CD4-positive, alpha-beta memory T cell (primary cell): ENCODE measurements at regions of chr11 and their contacts with region 1.

Region 1: GRCh38 chr11:13462901-13463778 is at the start of gene BTBD10:
- DNase-seq: peak; percentile 91 to 95 (median 92)
- H3K4me3 ChIP-seq: peak within 1 kb of the TSS; percentile 90 to 95
- H3K4me3 Mint-ChIP-seq: peak within 1 kb of the TSS; percentile 97 to 99 (median 98)
- H3K27ac ChIP-seq: peak within 1 kb of the TSS; percentile 92
- H3K27ac Mint-ChIP-seq: peak within 1 kb of the TSS; percentile 96 to 99 (median 97)
- H3K4me1 ChIP-seq: peaks cover 34% of the 10 kb centered on the region
- H3K4me1 Mint-ChIP-seq: peaks cover 30 to 56% (median 44%) of the 10 kb centered on the region in 4 donors
- H3K27me3 ChIP-seq: no peaks in the 10 kb centered on the region
- H3K27me3 Mint-ChIP-seq: no peaks in the 10 kb centered on the region
- total RNA-seq, gene BTBD10: 22.4 to 22.6 TPM

Region 2: GRCh38 chr11:12963792-12964536 is 499.2 kb before region 1 on chr11:
- CTCF ChIA-PET with region 1: interaction called, 4 read pairs
- POLR2A ChIA-PET with region 1: no interaction called
- intact Hi-C with region 1: loop called (anchors 2 kb)
- DNase-seq: peak; percentile 41 to 60 (median 52)
- H3K4me3 ChIP-seq: no peak overlapping the region
- H3K4me3 Mint-ChIP-seq: no peak overlapping the region
- H3K27ac ChIP-seq: no peak overlapping the region
- H3K27ac Mint-ChIP-seq: peak overlapping the region in 1 of 7 donors; percentile 31
- H3K4me1 ChIP-seq: no peaks in the 10 kb centered on the region
- H3K4me1 Mint-ChIP-seq: no peaks in the 10 kb centered on the region
- H3K27me3 ChIP-seq: no peaks in the 10 kb centered on the region
- H3K27me3 Mint-ChIP-seq: peaks cover 18 to 21% of the 10 kb centered on the region in 2 donors

Region 3: DNA sequence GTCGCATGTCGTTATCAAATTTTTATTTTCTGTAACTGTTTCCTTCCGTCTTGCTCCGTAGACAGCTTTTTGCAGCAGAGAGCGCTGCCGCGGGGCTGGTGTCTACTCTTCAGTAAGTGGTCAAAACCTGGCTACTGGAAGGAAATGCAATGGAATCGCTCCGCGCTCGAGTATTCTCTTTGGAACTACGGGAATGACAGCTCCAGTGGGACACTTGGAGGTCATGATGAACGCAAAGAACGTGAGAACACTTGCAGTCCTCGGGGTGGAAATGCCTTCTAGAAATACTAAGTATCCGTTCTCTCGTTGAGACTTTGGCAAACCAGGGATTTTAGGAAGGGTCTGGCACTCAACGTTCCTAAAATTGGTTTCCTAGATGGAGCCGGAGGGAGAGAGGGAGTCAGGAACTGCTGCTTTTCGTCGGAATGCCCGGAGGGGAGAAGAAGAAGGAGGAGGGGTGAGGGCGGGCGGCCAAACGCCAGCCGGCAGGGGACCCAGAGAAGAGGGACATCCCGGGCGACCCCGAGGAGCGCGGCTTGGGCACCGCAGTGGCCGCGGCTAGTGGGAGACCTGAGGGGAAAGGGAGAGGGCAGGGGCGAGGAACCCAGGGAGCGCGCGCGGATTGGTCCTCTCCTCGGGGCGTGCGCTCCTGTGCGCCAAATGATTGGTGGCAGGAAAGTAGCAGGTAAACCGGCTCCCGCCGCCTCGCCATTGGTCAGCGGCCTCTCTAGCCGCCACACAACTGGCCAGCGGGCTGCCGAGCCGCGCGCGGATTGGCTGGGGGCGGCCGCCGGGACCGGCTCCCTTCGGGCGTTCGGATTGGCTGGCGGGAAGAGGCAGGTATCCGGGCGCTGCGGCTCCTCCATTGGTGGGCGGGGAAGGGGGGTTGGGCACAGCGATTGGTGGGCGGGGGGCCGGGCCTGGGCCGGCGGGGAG is 186.0 kb before region 1 on chr11:
- CTCF ChIA-PET with region 1: interaction called, 4 read pairs
- POLR2A ChIA-PET with region 1: interaction called, 11 read pairs
- intact Hi-C with region 1: loop called (anchors 1 kb)
- DNase-seq: peak; percentile 97 to 98 (median 98)
- H3K4me3 ChIP-seq: peak overlapping the region; percentile 83 to 95
- H3K4me3 Mint-ChIP-seq: peak overlapping the region; percentile 93 to 100 (median 98)
- H3K27ac ChIP-seq: peak overlapping the region; percentile 80
- H3K27ac Mint-ChIP-seq: peak overlapping the region; percentile 94 to 99 (median 96)
- H3K4me1 ChIP-seq: peaks cover 42% of the 10 kb centered on the region
- H3K4me1 Mint-ChIP-seq: peaks cover 33 to 52% (median 42%) of the 10 kb centered on the region in 4 donors
- H3K27me3 ChIP-seq: peaks cover 5% of the 10 kb centered on the region
- H3K27me3 Mint-ChIP-seq: peaks cover 0 to 2% of the 10 kb centered on the region in 2 donors

Region 4: DNA sequence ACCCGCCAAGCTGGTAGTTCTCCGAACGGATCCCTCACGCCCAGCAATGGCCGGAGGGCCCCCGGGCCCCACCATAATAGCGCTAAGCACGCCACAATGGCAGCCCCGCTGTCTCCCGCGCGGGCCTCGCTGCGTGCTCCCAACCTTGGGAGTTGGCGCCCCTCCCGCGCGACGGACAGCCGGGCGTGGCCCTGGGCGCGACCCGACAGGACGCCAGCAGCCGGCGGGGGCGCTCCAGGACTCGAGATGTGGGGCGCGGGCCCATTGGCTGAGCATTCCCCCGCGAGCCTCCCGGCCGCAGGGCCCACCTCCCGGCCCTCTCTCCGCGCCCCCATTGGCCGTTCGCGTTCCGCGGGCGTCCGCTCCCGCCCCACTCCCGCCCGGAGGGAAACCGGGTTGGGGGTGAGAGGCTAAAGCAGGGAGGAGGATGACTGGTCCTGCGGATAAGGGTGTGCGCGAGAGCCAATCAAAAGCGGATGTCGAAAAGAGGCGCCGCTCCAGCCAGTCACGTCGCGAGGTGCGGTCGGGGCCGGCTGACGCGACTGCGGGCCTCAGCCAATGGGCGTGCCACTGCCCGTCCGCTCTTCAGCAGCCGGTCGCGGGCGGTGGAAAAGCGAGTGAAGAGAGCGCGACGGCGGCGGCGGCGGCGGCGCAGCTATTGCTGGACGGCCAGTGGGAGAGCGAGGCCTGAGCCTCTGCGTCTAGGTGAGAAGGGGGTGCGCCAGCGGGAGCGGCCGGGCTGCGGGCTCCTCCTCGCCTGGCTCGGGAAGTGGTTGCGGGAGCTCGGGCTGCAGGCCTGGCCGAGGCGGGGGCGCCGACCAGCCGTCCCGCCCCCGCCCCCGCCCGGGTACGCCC is 205.2 kb after region 1 on chr11 and contains the start of gene FAR1:
- CTCF ChIA-PET with region 1: interaction called, 4 read pairs
- POLR2A ChIA-PET with region 1: interaction called, 7 read pairs
- intact Hi-C with region 1: loop called (anchors 1 kb)
- DNase-seq: peak; percentile 96 to 98 (median 97)
- H3K4me3 ChIP-seq: peak within 1 kb of the TSS; percentile 73 to 84
- H3K4me3 Mint-ChIP-seq: peak within 1 kb of the TSS; percentile 93 to 99 (median 96)
- H3K27ac ChIP-seq: peak within 1 kb of the TSS; percentile 65
- H3K27ac Mint-ChIP-seq: peak within 1 kb of the TSS; percentile 95 to 97 (median 96)
- H3K4me1 ChIP-seq: peaks cover 44% of the 10 kb centered on the region
- H3K4me1 Mint-ChIP-seq: peaks cover 35 to 50% (median 41%) of the 10 kb centered on the region in 4 donors
- H3K27me3 ChIP-seq: no peaks in the 10 kb centered on the region
- H3K27me3 Mint-ChIP-seq: peaks cover 4% of the 10 kb centered on the region in 2 donors
- total RNA-seq, gene FAR1: 34.5 to 39.7 TPM

Region 5: DNA sequence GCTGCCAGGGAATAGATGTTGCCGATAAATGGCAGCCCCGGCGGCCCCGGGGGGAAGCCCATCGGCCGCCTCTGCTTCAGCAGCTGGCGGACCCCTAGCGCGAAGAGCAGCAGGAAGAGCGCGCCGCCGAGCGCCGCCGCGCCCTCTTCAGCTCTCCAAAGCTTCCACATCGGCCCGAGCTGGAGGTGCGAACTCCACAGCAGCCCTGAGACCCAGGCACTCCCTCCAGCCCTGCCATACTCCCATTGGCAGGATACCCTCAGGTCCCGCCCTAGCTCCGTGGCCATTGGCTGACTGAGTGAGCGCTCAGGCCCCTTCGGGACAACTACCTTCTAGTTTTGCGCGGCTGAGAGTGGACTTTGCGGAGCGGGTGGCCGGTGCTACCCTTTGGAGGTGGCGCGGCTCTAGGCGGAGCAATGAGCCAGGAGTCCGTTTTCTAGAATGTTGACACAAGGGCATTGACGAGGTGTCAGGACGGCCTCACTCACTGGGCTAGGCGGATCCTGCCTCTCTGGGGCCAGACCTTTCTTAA is 1429.0 kb after region 1 on chr11 and contains the start of gene CYP2R1:
- CTCF ChIA-PET with region 1: no interaction called
- POLR2A ChIA-PET with region 1: no interaction called
- intact Hi-C with region 1: loop called (anchors 5 kb)
- DNase-seq: peak; percentile 88 to 92 (median 91)
- H3K4me3 ChIP-seq: peak within 1 kb of the TSS; percentile 91 to 96
- H3K4me3 Mint-ChIP-seq: peak within 1 kb of the TSS; percentile 90 to 99 (median 94)
- H3K27ac ChIP-seq: peak within 1 kb of the TSS; percentile 80
- H3K27ac Mint-ChIP-seq: peak within 1 kb of the TSS; percentile 94 to 99 (median 96)
- H3K4me1 ChIP-seq: peaks cover 36% of the 10 kb centered on the region
- H3K4me1 Mint-ChIP-seq: peaks cover 17 to 48% (median 34%) of the 10 kb centered on the region in 4 donors
- H3K27me3 ChIP-seq: no peaks in the 10 kb centered on the region
- H3K27me3 Mint-ChIP-seq: no peaks in the 10 kb centered on the region
- total RNA-seq, gene CYP2R1: 12.1 to 14.7 TPM